K562 (cell line): ENCODE measurements at regions of chr6 and their contacts with region 1.

Region 1: DNA sequence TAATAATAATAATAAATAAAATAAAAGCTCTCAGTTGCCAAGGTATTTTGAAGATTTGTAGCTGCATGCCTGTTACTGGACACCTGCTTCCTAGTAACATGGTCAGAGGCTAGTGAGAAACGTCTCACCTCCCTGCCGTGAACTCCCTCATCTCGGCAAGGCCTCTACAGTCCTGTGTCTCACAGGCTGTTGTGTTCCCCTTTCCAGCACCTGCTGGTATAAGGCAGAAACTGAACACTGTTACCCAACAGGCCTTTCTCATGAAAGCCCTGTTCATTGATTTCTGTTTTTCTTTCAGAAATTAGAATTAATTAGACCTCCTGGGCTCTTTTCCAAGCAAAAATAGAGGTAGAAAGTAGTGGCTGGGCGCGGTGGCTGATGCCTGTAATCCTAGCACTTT is 17.6 kb upstream of the SRSF3 start:
- DNase-seq: no peak
- ATAC-seq: no peak
- H3K4me3 ChIP-seq: no peak overlapping the region
- H3K27ac ChIP-seq: no peak overlapping the region
- H3K4me1 ChIP-seq: peaks cover 16 to 21% of the 10 kb centered on the region in 2 experiments; a peak in 3 of 5 replicates
- H3K27me3 ChIP-seq: no peaks in the 10 kb centered on the region
- CTCF ChIP-seq: no peak
- EP300 ChIP-seq: no peak
- POLR2A ChIP-seq: no peak
- RAD21 ChIP-seq: no peak

Region 2: GRCh38 chr6:36280467-36280866 is 296.1 kb before region 1 on chr6:
- CTCF ChIA-PET with region 1: no interaction called
- POLR2A ChIA-PET with region 1: no interaction called
- in situ Hi-C with region 1: no loop called
- intact Hi-C with region 1: no loop called
- DNase-seq: no peak
- ATAC-seq: no peak
- H3K4me3 ChIP-seq: no peak overlapping the region
- H3K27ac ChIP-seq: no peak overlapping the region
- H3K4me1 ChIP-seq: peaks cover 0 to 4% of the 10 kb centered on the region in 2 experiments; a peak in 2 of 5 replicates
- H3K27me3 ChIP-seq: peaks cover 34 to 54% of the 10 kb centered on the region in 2 experiments; a peak in 4 of 5 replicates
- CTCF ChIP-seq: no peak
- EP300 ChIP-seq: no peak
- POLR2A ChIP-seq: no peak
- RAD21 ChIP-seq: no peak

Region 3: DNA sequence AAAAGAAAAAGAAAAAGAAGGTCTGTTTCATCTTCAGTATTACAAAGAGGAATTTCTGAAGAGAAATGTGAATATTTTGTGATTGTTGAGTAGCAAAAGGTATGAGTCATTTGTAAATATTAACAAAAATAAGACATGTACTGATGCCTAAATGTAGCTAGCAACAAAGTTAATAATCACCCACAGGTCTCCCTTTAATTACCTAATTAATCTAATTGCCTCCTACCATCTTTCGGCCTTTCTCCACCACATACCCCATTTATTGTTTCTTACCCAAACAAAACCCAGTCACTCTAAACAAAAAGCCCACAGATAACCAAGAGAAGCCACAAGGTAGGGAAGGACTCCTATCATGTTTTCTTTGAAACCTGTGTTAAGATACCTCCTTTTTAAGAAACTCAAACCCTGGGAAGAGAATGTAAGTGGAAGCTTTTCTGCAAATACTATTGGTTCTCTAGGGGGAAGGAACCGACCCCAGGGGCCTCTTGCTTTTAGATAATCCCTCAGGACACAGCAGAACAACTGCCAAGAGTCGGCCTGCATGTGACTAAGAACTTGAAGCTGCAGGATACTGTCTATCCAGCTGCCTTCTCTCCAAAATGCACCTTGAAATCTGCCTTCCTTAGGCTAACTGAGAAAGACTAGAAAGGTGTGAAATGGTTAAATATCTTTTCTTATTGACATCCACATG is 13.2 kb before region 1 on chr6:
- CTCF ChIA-PET with region 1: no interaction called
- POLR2A ChIA-PET with region 1: interaction called, 12 read pairs
- in situ Hi-C with region 1: no loop called
- intact Hi-C with region 1: no loop called
- DNase-seq: no peak
- ATAC-seq: peak; percentile 63
- H3K4me3 ChIP-seq: no peak overlapping the region
- H3K27ac ChIP-seq: no peak overlapping the region
- H3K4me1 ChIP-seq: no peaks in the 10 kb centered on the region; a peak in 2 of 5 replicates
- H3K27me3 ChIP-seq: no peaks in the 10 kb centered on the region
- CTCF ChIP-seq: no peak
- EP300 ChIP-seq: no peak
- POLR2A ChIP-seq: no peak
- RAD21 ChIP-seq: no peak